Calu3 (cell line): ENCODE measurements at regions of chr3 and their contacts with region 1.

Region 1: GRCh38 chr3:174397848-174398247 is 461.3 kb upstream of the NAALADL2 start:
- DNase-seq: no peak
- H3K4me3 Mint-ChIP-seq: no peak overlapping the region
- H3K27ac Mint-ChIP-seq: no peak overlapping the region
- H3K4me1 Mint-ChIP-seq: no peaks in the 10 kb centered on the region
- H3K27me3 Mint-ChIP-seq: no peaks in the 10 kb centered on the region
- CTCF ChIP-seq: peak; percentile 64

Region 2: DNA sequence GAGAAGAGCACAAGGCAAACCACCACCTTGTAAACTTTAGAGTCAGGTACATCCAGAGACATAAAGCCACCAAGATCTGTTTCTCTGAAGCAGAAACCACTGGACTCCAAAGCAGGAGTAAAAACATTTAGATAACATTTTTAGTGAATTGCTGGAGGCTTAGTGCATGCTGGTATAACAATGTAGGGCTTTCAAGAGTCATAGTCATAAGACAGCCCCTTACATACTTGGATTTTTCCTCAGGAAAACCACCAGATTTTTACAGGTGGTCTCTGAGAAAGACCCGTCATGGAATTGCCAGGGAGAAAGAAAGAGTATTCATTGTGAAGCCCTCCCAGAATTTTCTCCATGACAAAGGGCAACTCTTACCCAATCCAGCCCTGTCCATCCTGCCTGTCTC is 26.8 kb after region 1 on chr3:
- CTCF ChIA-PET with region 1: no interaction called
- intact Hi-C with region 1: no loop called
- DNase-seq: no peak
- H3K4me3 Mint-ChIP-seq: no peak overlapping the region
- H3K27ac Mint-ChIP-seq: no peak overlapping the region
- H3K4me1 Mint-ChIP-seq: no peaks in the 10 kb centered on the region
- H3K27me3 Mint-ChIP-seq: no peaks in the 10 kb centered on the region
- CTCF ChIP-seq: no peak

Region 3: DNA sequence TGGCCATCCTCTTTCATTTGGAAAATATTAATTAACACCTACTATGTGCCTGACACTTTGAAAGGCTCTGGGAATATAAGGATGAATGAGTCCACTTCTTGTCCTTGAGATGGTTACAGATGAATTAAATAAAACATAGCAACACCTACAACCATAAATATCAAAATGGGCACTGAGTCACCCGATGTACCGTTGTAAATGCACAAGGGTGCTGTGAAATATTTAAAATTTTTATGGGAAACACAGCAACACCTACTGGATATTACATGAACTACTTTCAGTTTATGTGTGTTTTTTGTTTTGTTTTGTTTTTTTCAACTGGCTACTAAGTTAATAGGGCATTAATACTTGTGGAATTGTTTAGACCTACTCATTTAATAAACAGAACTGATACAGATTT is 222.3 kb after region 1 on chr3:
- CTCF ChIA-PET with region 1: no interaction called
- intact Hi-C with region 1: loop called (anchors 2 kb)
- DNase-seq: no peak
- H3K4me3 Mint-ChIP-seq: no peak overlapping the region
- H3K27ac Mint-ChIP-seq: no peak overlapping the region
- H3K4me1 Mint-ChIP-seq: no peaks in the 10 kb centered on the region
- H3K27me3 Mint-ChIP-seq: no peaks in the 10 kb centered on the region
- CTCF ChIP-seq: no peak